Activated T-helper 1 cell treated with anti-CD3 and anti-CD28 coated beads, Interleukin-12 subunit alpha, Interleukin-12 subunit beta, Interleukin-2, Interleukin-4 antibody, amounts not matched to agents 30 ng/mL and 10 ng/mL and 1 ng/mL, durations not matched to agents 14 hours and 24 hours and 36 hours (primary cell): ENCODE measurements at regions of chr3 and their contacts with region 1.

Region 1: GRCh38 chr3:125110016-125110875 is 54.4 kb upstream of the HEG1 start:
- DNase-seq: no peak
- H3K4me3 Mint-ChIP-seq: no peak overlapping the region
- H3K27ac Mint-ChIP-seq: peak overlapping the region; percentile 77
- H3K4me1 Mint-ChIP-seq: peaks cover 33% of the 10 kb centered on the region
- H3K27me3 Mint-ChIP-seq: peaks cover 22% of the 10 kb centered on the region

Region 2: DNA sequence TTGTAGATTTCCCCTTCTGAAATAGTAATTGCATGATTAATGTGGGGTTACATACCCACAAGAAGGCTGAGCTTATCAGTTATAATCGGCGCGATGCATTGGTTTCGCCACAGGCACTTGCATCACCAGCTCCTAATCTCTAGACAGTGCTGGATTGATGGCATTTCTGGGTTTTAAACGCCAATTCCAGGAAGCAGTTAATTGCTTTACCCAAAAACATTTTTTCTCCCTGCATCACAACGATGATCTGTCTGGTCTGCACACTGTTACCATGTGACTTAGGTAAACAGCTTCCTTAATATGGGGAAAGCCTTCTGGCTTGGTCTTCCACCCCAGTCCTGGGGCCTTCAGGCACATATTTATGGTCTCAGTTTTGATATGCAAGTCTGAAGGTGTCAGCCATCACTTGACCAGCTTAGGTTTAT is 15.6 kb after region 1 on chr3:
- intact Hi-C with region 1: loop called (anchors 2 kb)
- DNase-seq: no peak
- H3K4me3 Mint-ChIP-seq: peak overlapping the region; percentile 12
- H3K27ac Mint-ChIP-seq: peak overlapping the region; percentile 76
- H3K4me1 Mint-ChIP-seq: peaks cover 60% of the 10 kb centered on the region
- H3K27me3 Mint-ChIP-seq: peaks cover 7% of the 10 kb centered on the region